ENCODE measurements at regions of chr1 and their contacts with region 1.

Region 1: DNA sequence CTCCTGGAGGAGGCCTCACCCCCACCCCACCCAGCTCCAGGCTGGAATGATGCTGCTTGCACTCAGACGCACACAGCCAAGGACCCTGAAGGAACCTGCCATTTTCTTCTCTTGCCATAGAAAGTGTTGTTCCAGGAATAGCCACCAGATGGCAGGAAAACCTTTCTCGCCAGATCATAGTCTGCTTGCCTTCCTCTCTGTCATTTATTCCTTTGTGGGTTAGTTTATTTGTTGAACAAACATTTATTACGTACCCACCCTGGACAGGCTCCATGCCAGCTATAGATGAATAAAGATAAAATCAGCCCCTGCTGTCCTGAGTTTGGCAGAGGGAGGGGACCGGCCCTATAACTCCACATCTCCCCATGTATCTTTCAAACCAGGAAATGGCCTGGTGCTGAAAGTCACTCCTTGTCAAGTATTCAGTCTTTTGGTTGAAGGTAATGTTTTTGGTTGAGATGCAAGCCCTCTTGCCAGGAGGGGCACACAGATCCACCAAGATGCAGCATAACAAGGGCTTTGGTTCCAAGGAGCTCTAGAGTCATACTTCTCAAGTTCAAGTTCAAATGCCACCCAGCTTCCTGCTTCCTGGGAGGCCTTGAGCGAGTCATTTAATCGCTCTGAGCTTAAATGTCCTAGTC is 7.0 kb upstream of the KCNC4 start:
- DNase-seq: peak; percentile 38 to 75 (median 67)
- H3K4me3 ChIP-seq: no peak overlapping the region
- H3K4me3 Mint-ChIP-seq: peak overlapping the region in 1 of 7 donors; percentile 32
- H3K27ac ChIP-seq: no peak overlapping the region
- H3K27ac Mint-ChIP-seq: peak overlapping the region; percentile 14 to 86 (median 74)
- H3K4me1 ChIP-seq: peaks cover 20% of the 10 kb centered on the region
- H3K4me1 Mint-ChIP-seq: peaks cover 14 to 26% (median 24%) of the 10 kb centered on the region in 3 donors
- H3K27me3 ChIP-seq: no peaks in the 10 kb centered on the region
- H3K27me3 Mint-ChIP-seq: peaks cover 0 to 2% of the 10 kb centered on the region in 2 donors

Region 2: DNA sequence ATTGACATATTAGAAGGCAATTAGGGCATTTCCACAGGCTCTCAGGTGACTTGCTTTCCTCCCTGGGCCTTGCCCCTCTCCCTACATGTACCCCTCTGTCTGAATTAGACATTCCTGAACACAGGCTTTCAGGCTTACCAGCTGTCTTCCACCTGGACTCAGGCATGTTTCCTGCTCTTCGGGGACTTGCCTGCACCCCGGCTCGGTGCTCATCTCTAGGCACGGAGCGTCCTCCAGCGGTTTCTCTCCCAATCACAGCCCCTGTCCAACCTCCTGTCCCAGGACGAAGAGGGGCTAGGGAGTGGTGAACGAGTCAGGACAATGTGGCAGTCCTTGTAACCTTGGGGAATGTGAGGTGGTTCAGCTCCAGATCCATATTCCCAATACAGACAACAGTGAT is 252.0 kb after region 1 on chr1:
- CTCF ChIA-PET with region 1: interaction called, 124 read pairs
- POLR2A ChIA-PET with region 1: interaction called, 5 read pairs
- DNase-seq: no peak
- H3K4me3 ChIP-seq: no peak overlapping the region
- H3K4me3 Mint-ChIP-seq: no peak overlapping the region
- H3K27ac ChIP-seq: no peak overlapping the region
- H3K27ac Mint-ChIP-seq: no peak overlapping the region
- H3K4me1 ChIP-seq: no peaks in the 10 kb centered on the region
- H3K4me1 Mint-ChIP-seq: no peaks in the 10 kb centered on the region
- H3K27me3 ChIP-seq: peaks cover 6% of the 10 kb centered on the region
- H3K27me3 Mint-ChIP-seq: peaks cover 11 to 27% of the 10 kb centered on the region in 2 donors

Region 3: GRCh38 chr1:110495926-110496600 is 292.9 kb after region 1 on chr1:
- CTCF ChIA-PET with region 1: interaction called, 20 read pairs
- POLR2A ChIA-PET with region 1: interaction called, 3 read pairs
- DNase-seq: peak; percentile 48 to 80 (median 59)
- H3K4me3 ChIP-seq: no peak overlapping the region
- H3K4me3 Mint-ChIP-seq: no peak overlapping the region
- H3K27ac ChIP-seq: no peak overlapping the region
- H3K27ac Mint-ChIP-seq: no peak overlapping the region
- H3K4me1 ChIP-seq: no peaks in the 10 kb centered on the region
- H3K4me1 Mint-ChIP-seq: no peaks in the 10 kb centered on the region
- H3K27me3 ChIP-seq: no peaks in the 10 kb centered on the region
- H3K27me3 Mint-ChIP-seq: peaks cover 0 to 9% of the 10 kb centered on the region in 2 donors

Measured in CD8-positive, alpha-beta memory T cell (primary cell).